Esophagus squamous epithelium (tissue), 5 donors: ENCODE measurements at regions of chr11 and their contacts with region 1.

Region 1: DNA sequence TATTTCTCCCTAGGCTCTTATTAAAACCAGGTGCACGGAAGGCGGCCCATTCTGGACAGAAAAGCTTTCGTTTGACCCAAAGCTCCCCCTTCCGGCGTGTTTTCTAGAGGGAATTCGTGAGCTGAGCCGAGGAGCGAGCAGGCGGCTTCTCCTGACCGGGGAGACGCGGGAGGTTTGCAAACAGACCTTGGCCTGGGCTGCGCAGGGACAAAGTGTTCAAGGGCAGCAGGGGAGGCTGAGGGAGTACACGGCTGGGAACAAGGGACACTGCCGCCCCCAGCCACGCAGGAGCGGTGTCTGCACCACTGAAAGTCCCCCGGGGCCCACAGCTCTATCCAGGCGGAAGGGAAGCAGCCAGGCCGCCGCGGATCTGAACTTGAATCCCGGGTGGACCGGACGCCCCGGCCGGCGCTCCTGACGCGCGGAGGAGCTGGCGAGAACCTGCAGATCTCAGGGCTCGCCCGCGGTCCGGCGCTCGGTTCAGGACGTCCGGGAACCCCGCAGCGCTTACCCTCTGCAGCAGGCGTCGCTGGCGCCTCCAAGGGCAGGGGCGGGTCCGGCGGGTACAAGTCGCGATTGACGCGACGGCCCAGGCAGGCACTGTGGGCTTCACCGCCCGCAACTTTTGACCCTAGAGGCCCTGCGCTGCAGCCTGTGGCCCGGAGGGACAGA is 101.9 kb downstream of the WT1 start:
- DNase-seq: no peak
- H3K4me3 ChIP-seq: peak overlapping the region; percentile 27 to 61 (median 46)
- H3K27ac ChIP-seq: no peak overlapping the region
- H3K4me1 ChIP-seq: peaks cover 0 to 14% (median 7%) of the 10 kb centered on the region in 3 donors
- H3K27me3 ChIP-seq: peaks cover 0 to 47% (median 0%) of the 10 kb centered on the region in 4 donors
- CTCF ChIP-seq: peak in 3 of 6 experiments; percentile 8 to 18 (median 8)
- POLR2A ChIP-seq: no peak

Region 2: DNA sequence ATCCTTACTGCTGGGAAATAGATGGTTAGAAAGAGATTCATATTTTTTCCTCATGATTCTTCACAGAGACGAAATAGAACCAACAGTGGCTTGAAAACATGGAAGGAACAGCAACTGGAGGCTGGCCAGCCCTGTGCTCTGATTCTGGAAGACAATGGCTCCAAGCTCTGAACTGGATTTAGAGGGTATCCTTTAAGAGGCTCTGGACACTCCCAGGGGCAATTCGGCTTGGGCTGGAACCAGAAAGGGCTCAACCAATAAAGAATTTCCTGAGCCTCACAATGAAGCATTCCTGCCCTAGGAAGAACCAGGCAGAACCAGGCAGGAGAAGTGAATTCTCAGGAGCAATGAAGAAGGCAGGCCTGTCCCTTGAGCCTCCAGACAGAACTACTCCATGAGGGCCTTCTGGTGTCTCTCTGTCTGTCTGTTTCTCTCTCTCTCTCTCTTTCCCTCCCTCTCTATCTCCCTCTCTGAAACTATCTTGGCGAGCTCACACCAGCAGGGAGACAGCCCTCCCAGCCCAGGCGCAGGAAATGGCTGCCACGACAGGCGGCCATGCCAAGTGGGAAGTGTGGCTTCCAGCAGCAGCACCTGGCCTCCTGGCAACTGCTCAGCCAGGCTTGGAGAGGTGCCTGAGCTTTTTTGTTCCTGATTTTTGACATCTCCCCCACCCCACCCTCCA is 149.3 kb before region 1 on chr11:
- intact Hi-C with region 1: no loop called
- DNase-seq: no peak
- H3K4me3 ChIP-seq: no peak overlapping the region
- H3K27ac ChIP-seq: no peak overlapping the region
- H3K4me1 ChIP-seq: no peaks in the 10 kb centered on the region
- H3K27me3 ChIP-seq: no peaks in the 10 kb centered on the region
- CTCF ChIP-seq: no peak
- POLR2A ChIP-seq: no peak

Region 3: GRCh38 chr11:32792948-32793475 is 459.6 kb after region 1 on chr11:
- intact Hi-C with region 1: loop called (anchors 10 kb)
- DNase-seq: no peak
- H3K4me3 ChIP-seq: peak overlapping the region in 1 of 4 donors; percentile 39
- H3K27ac ChIP-seq: no peak overlapping the region
- H3K4me1 ChIP-seq: peaks cover 0 to 8% (median 3%) of the 10 kb centered on the region in 3 donors
- H3K27me3 ChIP-seq: peaks cover 0 to 8% (median 0%) of the 10 kb centered on the region in 4 donors
- CTCF ChIP-seq: peak; percentile 51 to 75 (median 58)
- POLR2A ChIP-seq: no peak